ENCODE measurements at regions of chr17 and their contacts with region 1.

Region 1: GRCh38 chr17:1331708-1332107 is 52.2 kb downstream of the TRARG1 start:
- DNase-seq: peak; percentile 6
- H3K4me3 Mint-ChIP-seq: peak overlapping the region; percentile 50
- H3K27ac Mint-ChIP-seq: no peak overlapping the region
- H3K4me1 Mint-ChIP-seq: peaks cover 12% of the 10 kb centered on the region
- H3K27me3 Mint-ChIP-seq: peaks cover 11% of the 10 kb centered on the region

Region 2: DNA sequence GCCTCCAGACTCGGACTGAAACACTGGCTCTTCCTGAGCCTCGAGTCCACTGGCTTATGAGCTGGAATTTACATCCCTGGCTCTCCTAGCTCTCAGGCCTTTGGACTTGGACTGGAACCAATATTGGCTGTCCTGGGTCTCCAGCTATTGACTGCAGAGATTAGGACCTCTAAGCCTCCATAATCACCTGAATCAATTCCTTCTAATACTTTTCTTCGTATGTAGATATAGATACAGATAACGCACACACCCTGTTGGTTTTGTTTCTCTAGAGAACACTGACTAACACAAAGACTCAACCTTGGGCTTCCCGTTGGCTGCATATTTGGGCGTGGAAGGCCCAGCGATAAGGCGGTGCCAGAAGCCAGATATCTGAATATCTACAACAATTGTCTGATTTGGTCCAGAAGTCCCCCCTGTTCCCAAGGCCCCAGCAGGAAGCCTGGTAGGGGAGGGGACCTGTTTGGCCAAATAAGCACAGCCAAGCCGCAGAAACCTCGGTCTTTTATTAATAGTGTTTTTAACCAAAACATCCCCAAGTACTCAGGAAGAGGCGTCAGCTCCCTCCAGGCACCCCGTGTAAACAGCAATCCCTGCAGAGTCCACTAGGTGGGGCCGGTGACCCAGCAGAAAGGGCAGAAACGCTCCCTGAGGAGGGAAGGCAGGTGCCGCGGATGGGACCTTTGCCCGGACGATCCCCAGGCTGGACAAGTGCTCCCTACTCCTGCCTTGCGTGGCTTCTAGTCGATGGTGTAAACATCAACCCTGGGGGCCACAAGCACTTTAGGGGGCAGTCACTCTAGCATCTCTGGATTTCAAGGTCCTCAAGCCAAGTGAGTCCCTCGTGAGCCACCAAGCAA is 208.9 kb before region 1 on chr17:
- intact Hi-C with region 1: loop called (anchors 2 kb)
- DNase-seq: peak; percentile 72
- H3K4me3 Mint-ChIP-seq: no peak overlapping the region
- H3K27ac Mint-ChIP-seq: no peak overlapping the region
- H3K4me1 Mint-ChIP-seq: no peaks in the 10 kb centered on the region
- H3K27me3 Mint-ChIP-seq: peaks cover 2% of the 10 kb centered on the region

Region 3: DNA sequence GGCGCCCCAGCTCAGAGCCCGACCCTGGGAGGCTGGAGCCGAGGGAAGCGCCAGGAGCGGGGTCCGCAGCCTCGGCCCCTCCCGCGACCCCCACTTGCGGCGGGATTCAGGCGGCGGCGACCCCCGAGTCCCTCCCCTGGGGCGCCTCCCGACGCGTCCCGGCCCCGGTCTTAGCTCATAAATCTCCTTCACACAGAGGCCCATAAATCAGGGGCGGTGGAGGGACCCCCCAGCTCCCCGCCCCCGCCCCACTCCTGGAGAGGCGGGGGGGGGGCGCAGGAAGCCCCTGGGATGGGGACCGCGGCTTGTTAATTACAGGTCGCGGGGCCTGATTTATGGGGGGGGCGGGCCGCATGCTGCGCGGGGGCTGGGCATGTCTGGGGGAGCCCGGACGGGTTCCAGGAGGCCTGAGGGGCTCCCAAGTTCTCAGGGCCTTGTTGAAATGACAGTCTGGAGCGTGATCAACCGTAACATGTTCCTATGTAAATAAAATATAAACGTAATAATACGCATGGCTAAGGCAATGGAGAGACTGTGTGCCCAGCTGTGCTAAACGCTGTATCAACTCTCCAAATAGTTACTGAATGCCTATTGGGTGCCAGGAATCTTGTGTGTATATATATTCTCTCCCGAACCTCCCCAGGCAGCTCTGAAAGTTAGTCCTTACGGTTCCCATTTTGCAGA is 71.5 kb before region 1 on chr17:
- intact Hi-C with region 1: loop called (anchors 1 kb)
- DNase-seq: no peak
- H3K4me3 Mint-ChIP-seq: peak overlapping the region; percentile 10
- H3K27ac Mint-ChIP-seq: no peak overlapping the region
- H3K4me1 Mint-ChIP-seq: peaks cover 19% of the 10 kb centered on the region
- H3K27me3 Mint-ChIP-seq: peaks cover 50% of the 10 kb centered on the region

Region 4: DNA sequence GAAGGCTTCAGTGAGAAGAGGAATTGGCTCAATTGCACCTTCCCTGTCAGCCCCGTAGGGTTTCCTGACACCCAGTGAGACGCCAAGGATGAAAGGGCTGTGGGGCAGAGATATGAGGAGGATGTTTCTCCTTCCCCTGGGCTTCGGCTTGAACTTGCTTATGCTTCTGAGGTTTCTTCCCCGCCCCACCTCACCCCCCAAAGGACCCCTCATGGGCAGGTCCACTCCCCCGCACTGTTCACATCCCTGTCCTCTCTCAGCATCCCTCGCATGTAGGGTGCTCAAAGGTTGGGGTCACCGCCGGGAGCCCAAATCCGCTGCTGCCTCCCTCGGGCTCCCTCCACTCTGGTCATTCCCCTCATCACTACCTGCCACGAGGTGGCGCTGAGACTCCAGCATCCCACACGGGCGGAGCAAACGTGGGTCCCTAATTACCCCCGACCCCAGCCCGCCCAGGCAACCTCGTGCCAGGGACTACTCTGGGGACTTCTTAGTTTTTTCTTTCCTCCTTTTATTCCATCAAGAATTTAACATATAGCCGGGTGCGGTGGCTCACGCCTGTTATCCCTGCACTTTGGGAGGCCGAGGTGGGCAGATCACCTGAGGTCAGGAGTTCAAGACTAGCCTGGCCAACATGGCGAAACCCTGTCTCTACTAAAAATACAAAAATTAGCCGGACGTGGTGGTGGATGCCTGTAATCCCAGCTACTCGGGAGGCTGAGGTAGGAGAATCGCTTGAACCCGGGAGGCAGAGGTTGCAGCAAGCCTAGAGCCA is 55.6 kb before region 1 on chr17:
- intact Hi-C with region 1: loop called (anchors 1 kb)
- DNase-seq: peak; percentile 63
- H3K4me3 Mint-ChIP-seq: peak overlapping the region; percentile 39
- H3K27ac Mint-ChIP-seq: peak overlapping the region; percentile 59
- H3K4me1 Mint-ChIP-seq: peaks cover 13% of the 10 kb centered on the region
- H3K27me3 Mint-ChIP-seq: peaks cover 23% of the 10 kb centered on the region

Region 5: DNA sequence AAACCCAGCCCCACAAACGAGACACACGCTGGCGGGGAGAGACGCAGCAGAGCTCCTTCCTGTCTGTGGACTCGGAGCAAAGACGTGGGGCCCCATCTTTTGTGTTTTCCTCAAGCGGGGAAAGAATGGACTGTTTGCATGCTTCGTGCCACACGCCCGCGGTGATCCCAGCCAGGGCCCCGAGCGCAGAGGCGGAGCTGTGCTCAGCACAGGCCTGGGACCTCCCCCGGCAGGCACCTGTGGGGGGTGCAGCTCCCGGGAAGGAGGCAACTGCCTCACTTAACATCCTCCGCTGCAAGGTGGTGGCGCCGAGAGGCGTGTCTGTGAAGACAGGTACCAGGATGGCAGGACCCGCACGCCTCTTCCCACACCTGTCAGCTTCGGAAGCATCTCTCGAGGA is 33.1 kb before region 1 on chr17:
- intact Hi-C with region 1: no loop called
- DNase-seq: peak; percentile 22
- H3K4me3 Mint-ChIP-seq: peak overlapping the region; percentile 30
- H3K27ac Mint-ChIP-seq: no peak overlapping the region
- H3K4me1 Mint-ChIP-seq: peaks cover 40% of the 10 kb centered on the region
- H3K27me3 Mint-ChIP-seq: no peaks in the 10 kb centered on the region

Region 6: DNA sequence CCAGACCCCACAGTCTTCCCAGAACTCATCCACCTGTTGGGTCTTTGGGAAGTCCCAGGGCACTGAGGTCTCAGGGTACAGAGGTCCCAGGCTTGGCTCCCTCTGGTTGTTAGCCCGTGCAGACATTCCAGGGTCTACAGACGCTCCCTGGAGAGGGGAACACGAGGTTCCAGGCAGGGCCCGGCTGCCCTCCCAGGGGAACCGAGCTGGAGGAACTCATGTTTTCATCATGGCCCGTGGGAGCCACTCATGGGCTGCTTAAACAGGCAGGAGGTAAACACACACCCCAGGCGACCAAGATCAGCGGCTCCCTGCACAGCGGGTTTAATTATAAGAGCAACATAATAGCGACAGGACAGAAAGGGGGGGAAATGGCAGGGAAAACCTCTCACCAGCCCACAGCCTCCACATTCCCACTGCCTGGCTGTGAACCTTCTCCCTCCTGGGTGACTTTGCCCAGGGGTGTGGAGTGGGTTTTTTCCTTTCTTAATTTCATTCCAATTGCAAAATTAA is 15.8 kb before region 1 on chr17:
- intact Hi-C with region 1: no loop called
- DNase-seq: no peak
- H3K4me3 Mint-ChIP-seq: no peak overlapping the region
- H3K27ac Mint-ChIP-seq: no peak overlapping the region
- H3K4me1 Mint-ChIP-seq: no peaks in the 10 kb centered on the region
- H3K27me3 Mint-ChIP-seq: peaks cover 16% of the 10 kb centered on the region

Region 7: GRCh38 chr17:1347589-1348323 is 16.0 kb after region 1 on chr17:
- intact Hi-C with region 1: no loop called
- DNase-seq: no peak
- H3K4me3 Mint-ChIP-seq: no peak overlapping the region
- H3K27ac Mint-ChIP-seq: peak overlapping the region; percentile 21
- H3K4me1 Mint-ChIP-seq: peaks cover 16% of the 10 kb centered on the region
- H3K27me3 Mint-ChIP-seq: no peaks in the 10 kb centered on the region

Region 8: DNA sequence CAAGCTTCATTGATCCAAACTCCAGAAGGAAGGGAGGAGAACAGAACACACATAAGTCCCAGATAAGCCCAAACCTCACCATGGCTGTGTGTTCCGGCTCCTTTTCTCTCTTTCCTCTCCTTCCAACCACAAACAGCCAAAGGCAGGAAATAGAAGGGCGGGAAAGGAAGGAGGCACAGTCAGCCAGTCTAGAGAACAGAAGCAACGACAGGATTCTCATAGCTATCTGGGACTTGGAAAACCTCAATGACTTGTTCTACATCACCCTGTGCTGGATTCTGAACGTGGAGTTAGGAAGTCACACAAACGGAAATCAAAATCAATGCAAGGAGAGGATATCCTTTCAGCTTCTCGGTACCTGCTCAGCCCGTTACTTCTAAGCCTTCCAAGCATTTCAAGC is 115.3 kb after region 1 on chr17:
- intact Hi-C with region 1: no loop called
- DNase-seq: no peak
- H3K4me3 Mint-ChIP-seq: no peak overlapping the region
- H3K27ac Mint-ChIP-seq: no peak overlapping the region
- H3K4me1 Mint-ChIP-seq: peaks cover 24% of the 10 kb centered on the region
- H3K27me3 Mint-ChIP-seq: no peaks in the 10 kb centered on the region

Measured in activated T-helper 1 cell treated with anti-CD3 and anti-CD28 coated beads, Interleukin-12 subunit alpha, Interleukin-12 subunit beta, Interleukin-2, Interleukin-4 antibody, amounts not matched to agents 30 ng/mL and 10 ng/mL and 1 ng/mL, durations not matched to agents 14 hours and 24 hours and 36 hours (primary cell).